Cardiac septum (tissue), 1 donor: ENCODE measurements at regions of chr22 and their contacts with region 1.

Region 1: GRCh38 chr22:41596776-41597634 is 7.4 kb upstream of the PMM1 start:
- DNase-seq: no peak

Region 2: GRCh38 chr22:41403532-41404318 is 193.3 kb before region 1 on chr22:
- intact Hi-C with region 1: loop called (anchors 5 kb)
- DNase-seq: peak; percentile 95

Region 3: GRCh38 chr22:41532908-41533825 is 63.8 kb before region 1 on chr22:
- intact Hi-C with region 1: no loop called
- DNase-seq: peak; percentile 87

Region 4: GRCh38 chr22:41543854-41544670 is 52.9 kb before region 1 on chr22 and contains the start of gene POLR3H:
- intact Hi-C with region 1: loop called (anchors 5 kb)
- DNase-seq: peak; percentile 99
- total RNA-seq, gene POLR3H: 18.6 TPM

Region 5: DNA sequence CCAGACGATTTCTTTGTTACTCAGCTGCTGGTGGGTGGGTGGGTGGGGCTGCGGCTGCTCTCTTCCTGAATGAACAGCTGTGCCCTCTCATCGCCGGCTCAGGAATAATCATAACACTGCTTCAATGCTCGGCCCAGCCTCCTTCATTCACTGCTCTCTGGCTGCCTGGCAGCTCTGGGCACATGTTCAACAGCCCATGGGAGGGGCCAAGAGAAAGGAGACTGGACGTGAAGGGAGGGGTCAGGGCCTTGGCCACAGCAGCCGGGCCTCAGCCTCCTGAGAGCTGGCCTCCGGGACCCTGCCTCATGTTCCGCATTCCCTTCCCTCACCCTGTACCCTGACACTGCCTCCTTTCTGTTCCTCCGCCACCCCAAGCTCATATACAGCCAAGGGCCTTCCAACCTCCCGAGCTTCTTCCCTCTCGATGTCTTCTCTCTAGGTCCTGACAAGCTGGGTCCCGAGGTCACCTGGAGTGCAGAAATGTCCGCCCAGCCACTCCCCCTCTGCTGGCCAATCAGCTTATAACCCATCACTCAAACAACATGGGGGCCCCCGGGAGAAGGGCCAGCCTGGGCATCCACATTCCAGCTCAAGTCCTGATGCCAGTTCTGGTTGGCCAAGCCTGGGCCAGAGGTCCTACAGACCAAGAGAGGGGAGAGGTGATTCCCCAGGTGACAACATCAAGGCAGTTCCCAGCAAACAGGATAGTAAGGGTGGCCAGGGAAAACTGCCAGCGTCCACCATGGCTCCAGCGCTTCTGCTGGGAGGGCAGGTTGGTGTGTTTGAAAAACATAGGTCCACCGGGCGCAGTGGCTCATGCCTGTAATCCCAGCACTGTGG is 39.4 kb before region 1 on chr22:
- intact Hi-C with region 1: loop called (anchors 5 kb)
- DNase-seq: no peak

Region 6: GRCh38 chr22:41576877-41577276 is 20.1 kb before region 1 on chr22:
- intact Hi-C with region 1: loop called (anchors 2 kb)
- DNase-seq: no peak